CD8-positive, alpha-beta memory T cell (primary cell): ENCODE measurements at regions of chr5 and their contacts with region 1.

Region 1: GRCh38 chr5:73902327-73903051 is 276.5 kb downstream of the ARHGEF28 start:
- DNase-seq: peak in 2 of 5 donors; percentile 34 to 35
- H3K4me3 ChIP-seq: no peak overlapping the region
- H3K4me3 Mint-ChIP-seq: no peak overlapping the region
- H3K27ac ChIP-seq: no peak overlapping the region
- H3K27ac Mint-ChIP-seq: no peak overlapping the region
- H3K4me1 ChIP-seq: no peaks in the 10 kb centered on the region
- H3K4me1 Mint-ChIP-seq: no peaks in the 10 kb centered on the region
- H3K27me3 ChIP-seq: no peaks in the 10 kb centered on the region
- H3K27me3 Mint-ChIP-seq: peaks cover 6 to 17% of the 10 kb centered on the region in 2 donors

Region 2: GRCh38 chr5:73856997-73857396 is 45.5 kb before region 1 on chr5:
- CTCF ChIA-PET with region 1: no interaction called
- POLR2A ChIA-PET with region 1: no interaction called
- DNase-seq: no peak
- H3K4me3 ChIP-seq: no peak overlapping the region
- H3K4me3 Mint-ChIP-seq: no peak overlapping the region
- H3K27ac ChIP-seq: no peak overlapping the region
- H3K27ac Mint-ChIP-seq: no peak overlapping the region
- H3K4me1 ChIP-seq: no peaks in the 10 kb centered on the region
- H3K4me1 Mint-ChIP-seq: no peaks in the 10 kb centered on the region
- H3K27me3 ChIP-seq: no peaks in the 10 kb centered on the region
- H3K27me3 Mint-ChIP-seq: peaks cover 1 to 15% of the 10 kb centered on the region in 2 donors

Region 3: DNA sequence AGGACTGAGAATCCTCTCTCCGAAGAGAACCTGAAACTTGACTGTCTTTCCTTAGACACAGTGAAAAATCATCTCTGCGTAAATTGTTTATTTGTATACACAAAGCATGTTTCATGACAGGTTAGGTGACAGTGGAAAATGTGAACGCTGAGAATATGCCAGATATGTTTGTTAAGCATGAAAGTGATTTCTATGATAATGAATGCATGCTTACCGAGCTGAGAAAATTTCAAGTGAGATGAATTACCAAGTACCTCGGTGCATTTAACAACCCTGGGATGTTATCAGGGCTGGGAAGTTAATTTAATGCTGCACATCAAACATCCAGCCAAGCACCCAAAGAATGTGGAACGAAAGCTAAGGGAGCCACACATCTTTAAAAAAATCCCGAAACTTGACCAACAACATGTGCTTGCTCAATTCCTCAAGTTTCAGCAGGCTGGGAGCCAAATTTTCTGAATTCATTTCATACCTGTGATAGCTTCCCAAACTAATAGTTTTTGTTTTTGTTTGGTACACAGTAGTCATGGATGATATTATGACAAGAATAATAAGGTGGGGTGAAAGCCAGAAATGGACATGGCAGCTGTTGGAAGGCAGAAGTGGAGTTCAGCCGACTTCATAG is 60.4 kb after region 1 on chr5:
- CTCF ChIA-PET with region 1: no interaction called
- POLR2A ChIA-PET with region 1: no interaction called
- DNase-seq: no peak
- H3K4me3 ChIP-seq: no peak overlapping the region
- H3K4me3 Mint-ChIP-seq: no peak overlapping the region
- H3K27ac ChIP-seq: no peak overlapping the region
- H3K27ac Mint-ChIP-seq: no peak overlapping the region
- H3K4me1 ChIP-seq: no peaks in the 10 kb centered on the region
- H3K4me1 Mint-ChIP-seq: peaks cover 0 to 5% (median 0%) of the 10 kb centered on the region in 3 donors
- H3K27me3 ChIP-seq: no peaks in the 10 kb centered on the region
- H3K27me3 Mint-ChIP-seq: peaks cover 4 to 26% of the 10 kb centered on the region in 2 donors

Region 4: DNA sequence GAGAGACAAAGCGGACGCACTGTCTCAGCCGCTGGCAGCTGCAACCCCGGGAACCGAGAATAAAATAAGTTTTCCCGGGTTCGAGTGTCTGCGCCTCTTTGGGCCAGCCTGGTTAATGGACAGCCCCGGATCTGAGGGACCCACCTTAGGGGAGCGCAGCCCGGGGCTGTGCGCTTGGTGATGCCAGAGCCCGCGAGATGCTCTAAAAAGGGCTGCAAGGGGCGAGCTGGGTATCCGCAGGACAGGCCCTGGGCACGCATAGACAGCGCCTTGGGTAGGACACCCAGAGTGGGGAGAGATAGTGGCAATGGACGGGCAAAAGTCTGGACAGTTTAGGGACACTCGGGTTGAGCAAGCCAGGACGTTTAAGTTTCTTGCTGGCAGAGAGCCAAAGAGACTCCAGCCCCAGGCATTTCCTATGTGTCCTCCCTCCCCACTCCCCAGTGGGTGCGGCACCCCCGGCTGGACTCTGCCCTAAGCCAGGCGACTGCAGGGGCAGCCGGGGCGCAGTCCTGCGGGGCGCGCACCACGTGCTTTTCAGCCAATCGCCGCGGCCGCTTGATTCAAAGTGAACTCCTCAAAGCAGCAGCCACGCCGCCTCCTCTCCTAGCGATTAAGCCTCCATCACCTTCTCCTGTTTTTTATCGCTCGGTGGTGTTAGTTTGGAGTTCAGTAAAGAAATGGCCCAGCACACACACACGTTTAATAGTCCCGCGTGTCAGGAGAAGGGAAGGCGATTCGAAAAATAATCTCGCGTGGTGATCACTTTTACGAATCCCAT is 738.7 kb after region 1 on chr5:
- CTCF ChIA-PET with region 1: interaction called, 12 read pairs
- POLR2A ChIA-PET with region 1: no interaction called
- DNase-seq: peak in 3 of 5 donors; percentile 14 to 34 (median 21)
- H3K4me3 ChIP-seq: peak overlapping the region; percentile 79
- H3K4me3 Mint-ChIP-seq: peak overlapping the region; percentile 86 to 96 (median 89)
- H3K27ac ChIP-seq: peak overlapping the region; percentile 8
- H3K27ac Mint-ChIP-seq: peak overlapping the region in 6 of 8 donors; percentile 46 to 95 (median 68)
- H3K4me1 ChIP-seq: peaks cover 11% of the 10 kb centered on the region
- H3K4me1 Mint-ChIP-seq: peaks cover 23 to 41% (median 34%) of the 10 kb centered on the region in 3 donors
- H3K27me3 ChIP-seq: no peaks in the 10 kb centered on the region
- H3K27me3 Mint-ChIP-seq: peaks cover 9 to 30% of the 10 kb centered on the region in 2 donors

Region 5: DNA sequence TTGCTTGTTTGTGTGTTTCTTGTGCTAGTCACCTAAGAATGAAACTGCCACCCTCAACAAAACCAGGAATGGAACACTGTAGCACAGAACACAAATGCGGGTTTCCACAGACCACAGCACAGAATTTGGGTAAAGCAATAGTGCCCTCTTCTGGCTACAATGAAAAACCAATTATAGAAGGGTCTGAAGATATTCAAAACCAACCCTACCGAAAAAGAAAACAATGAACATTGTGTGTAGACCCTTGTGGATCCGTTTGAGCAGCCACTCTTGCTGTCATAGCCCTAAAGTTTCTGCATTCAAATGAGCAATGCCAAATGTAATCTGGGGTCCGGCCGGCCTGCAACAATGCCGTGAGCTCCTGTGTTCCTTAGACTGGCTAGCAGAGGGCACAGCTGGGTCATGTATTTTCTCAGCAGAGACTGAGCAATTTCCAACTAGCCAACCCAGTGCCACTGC is 746.4 kb after region 1 on chr5:
- CTCF ChIA-PET with region 1: interaction called, 34 read pairs
- POLR2A ChIA-PET with region 1: no interaction called
- DNase-seq: peak in 3 of 5 donors; percentile 45 to 57 (median 49)
- H3K4me3 ChIP-seq: no peak overlapping the region
- H3K4me3 Mint-ChIP-seq: no peak overlapping the region
- H3K27ac ChIP-seq: no peak overlapping the region
- H3K27ac Mint-ChIP-seq: no peak overlapping the region
- H3K4me1 ChIP-seq: no peaks in the 10 kb centered on the region
- H3K4me1 Mint-ChIP-seq: peaks cover 0 to 3% (median 0%) of the 10 kb centered on the region in 3 donors
- H3K27me3 ChIP-seq: no peaks in the 10 kb centered on the region
- H3K27me3 Mint-ChIP-seq: peaks cover 5 to 28% of the 10 kb centered on the region in 2 donors